ENCODE measurements at regions of chr1 and their contacts with region 1.

Region 1: DNA sequence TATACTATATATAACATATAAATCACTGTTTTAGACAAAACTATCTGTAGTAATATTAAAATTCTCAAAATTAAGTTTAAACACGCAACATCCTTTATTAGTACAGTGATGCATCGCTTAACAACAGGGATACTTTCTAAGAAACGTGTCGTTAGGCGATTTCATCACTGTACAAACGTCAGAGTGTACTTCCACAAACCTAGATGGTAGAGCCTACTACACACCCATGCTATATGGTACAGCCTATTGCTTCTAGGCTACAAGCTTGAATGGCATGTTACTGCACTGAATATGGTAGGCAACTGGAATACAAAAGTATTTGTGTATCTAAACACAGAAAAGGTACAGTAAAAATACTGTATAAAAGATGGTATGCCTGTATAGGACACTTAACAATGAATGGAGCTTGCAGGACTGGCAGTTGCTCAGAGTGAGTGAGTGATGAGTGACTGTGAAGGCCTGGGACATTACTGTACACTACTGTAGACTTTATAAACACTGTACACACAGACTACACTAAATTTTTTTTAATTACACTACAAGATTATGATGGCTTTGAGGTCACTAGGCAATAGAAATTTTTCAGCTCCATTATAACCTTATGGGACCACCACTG is 10.5 kb downstream of the FOXJ3 start:
- DNase-seq: no peak
- ATAC-seq: peak; percentile 35
- H3K4me3 ChIP-seq: no peak overlapping the region
- H3K27ac ChIP-seq: no peak overlapping the region
- H3K4me1 ChIP-seq: peaks cover 12% of the 10 kb centered on the region
- H3K27me3 ChIP-seq: no peaks in the 10 kb centered on the region
- CTCF ChIP-seq: no peak

Region 2: GRCh38 chr1:42214447-42214871 is 110.0 kb before region 1 on chr1:
- CTCF ChIA-PET with region 1: no interaction called
- POLR2A ChIA-PET with region 1: no interaction called
- intact Hi-C with region 1: no loop called
- DNase-seq: peak; percentile 71
- ATAC-seq: peak; percentile 60
- H3K4me3 ChIP-seq: no peak overlapping the region
- H3K27ac ChIP-seq: peak overlapping the region; percentile 64
- H3K4me1 ChIP-seq: peaks cover 39% of the 10 kb centered on the region
- H3K27me3 ChIP-seq: no peaks in the 10 kb centered on the region
- CTCF ChIP-seq: no peak

Region 3: DNA sequence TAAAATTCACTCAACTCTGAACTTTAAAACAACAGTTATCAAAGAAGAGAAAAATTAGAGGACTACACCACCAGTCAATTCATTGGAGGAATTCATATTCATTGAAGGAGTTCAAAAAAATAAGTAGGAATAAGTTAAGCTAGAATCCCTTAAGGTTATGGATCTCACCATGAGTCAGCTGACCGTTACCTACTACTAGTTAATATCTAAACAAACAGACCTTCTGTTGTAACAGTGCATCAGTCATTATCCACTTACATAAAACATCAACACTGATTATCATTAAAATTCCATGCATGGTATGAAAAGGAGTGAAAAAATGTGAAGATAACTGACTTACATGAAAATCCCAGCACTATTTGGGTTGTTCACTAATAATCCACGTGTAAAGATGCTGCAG is 34.4 kb before region 1 on chr1:
- CTCF ChIA-PET with region 1: no interaction called
- POLR2A ChIA-PET with region 1: no interaction called
- intact Hi-C with region 1: loop called (anchors 5 kb)
- DNase-seq: peak; percentile 46
- ATAC-seq: peak; percentile 66
- H3K4me3 ChIP-seq: no peak overlapping the region
- H3K27ac ChIP-seq: no peak overlapping the region
- H3K4me1 ChIP-seq: peaks cover 13% of the 10 kb centered on the region
- H3K27me3 ChIP-seq: no peaks in the 10 kb centered on the region
- CTCF ChIP-seq: no peak